ENCODE measurements at regions of chr17 and their contacts with region 1.

Region 1: GRCh38 chr17:30716461-30717300 is 107.8 kb downstream of the CRLF3 start:
- DNase-seq: peak in 1 of 2 experiments; percentile 22
- H3K4me3 ChIP-seq: no peak overlapping the region
- H3K4me1 ChIP-seq: no peaks in the 10 kb centered on the region
- H3K27me3 ChIP-seq: no peaks in the 10 kb centered on the region

Region 2: DNA sequence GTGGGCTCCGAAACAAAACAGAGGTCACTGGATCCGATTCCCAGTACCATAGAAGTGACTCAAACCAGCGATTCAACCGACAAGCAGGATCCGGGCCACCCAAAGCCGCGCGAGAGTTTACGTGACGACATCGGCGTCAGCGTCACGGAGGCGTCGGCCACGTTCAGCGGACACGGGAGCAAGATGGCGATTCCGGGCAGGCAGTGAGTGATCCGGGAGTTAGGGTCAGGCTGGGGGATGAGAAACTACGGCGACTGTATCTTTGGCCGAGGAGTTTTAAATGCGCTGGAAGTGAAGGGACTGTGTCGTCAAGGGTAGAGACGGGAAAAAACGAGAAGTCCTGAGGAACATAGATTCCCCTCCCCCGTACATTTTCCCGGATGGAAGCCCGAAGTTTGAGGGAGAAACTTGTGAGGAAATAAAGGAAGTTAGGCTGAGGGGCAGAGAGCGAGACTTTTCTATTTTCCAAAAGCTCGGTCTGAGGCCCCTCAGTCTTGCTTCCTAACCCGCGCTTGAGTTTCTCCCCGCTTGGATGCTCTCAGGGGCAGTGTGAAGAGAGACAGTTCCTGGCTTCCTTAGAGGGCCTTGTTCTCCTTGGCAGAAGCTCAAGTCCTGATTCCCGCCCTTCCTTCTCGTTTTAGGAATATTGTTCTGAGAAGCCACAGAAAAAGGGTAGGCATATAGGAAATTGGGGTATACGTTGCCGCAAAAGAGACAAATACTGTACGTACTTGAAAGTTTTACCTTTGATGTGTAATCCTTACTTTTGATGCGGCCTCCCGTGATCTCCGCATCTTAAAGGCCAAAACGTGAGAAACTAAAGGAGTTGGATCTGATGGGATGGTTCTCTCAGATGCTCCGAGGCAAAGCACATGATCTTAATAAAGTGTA is 599.8 kb before region 1 on chr17 and contains the start of gene NSRP1:
- in situ Hi-C with region 1: loop called (anchors 25 kb)
- DNase-seq: peak; percentile 87 to 96
- H3K4me3 ChIP-seq: peak within 1 kb of the TSS; percentile 76
- H3K4me1 ChIP-seq: peaks cover 25% of the 10 kb centered on the region
- H3K27me3 ChIP-seq: no peaks in the 10 kb centered on the region

Region 3: DNA sequence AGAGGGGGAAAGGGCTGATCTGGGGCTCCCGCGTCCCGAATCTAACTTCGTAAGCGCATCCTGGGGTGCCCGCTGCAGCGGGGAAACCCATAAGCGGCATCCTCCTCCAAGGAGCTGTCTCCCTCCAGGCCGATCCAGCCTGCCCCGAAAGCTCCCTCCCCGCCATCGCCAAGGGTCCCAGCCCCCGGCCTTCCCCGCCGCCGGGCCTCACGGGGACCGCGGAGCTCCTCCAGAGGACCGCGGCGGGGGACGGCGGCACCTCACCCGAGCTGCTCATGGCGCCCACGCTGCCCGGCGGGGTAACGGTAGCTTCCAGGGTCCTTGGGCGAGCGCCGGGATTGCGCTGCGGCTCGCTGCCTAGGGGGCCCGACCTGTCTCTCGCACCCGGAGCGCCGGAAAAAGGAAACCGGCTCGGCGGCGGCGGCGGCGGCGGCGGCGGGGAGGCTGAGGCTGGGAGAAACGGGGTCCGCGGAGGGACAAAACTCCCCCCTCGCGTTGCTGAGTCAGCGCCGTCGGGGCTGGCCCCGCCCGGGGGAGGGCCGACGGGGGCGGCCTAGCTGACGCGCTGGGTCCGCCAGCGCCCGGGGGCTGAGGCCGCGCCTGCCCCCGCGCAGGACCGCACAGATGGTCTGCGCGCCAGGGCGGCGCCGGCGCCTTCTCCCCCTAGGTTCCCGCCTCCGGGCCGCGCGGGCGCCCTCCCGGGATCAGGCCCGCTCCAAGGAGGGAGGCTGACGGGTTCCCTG is 425.0 kb before region 1 on chr17 and contains the start of gene BLMH:
- in situ Hi-C with region 1: no loop called
- DNase-seq: peak; percentile 64 to 83
- H3K4me3 ChIP-seq: peak within 1 kb of the TSS; percentile 77
- H3K4me1 ChIP-seq: peaks cover 13% of the 10 kb centered on the region
- H3K27me3 ChIP-seq: no peaks in the 10 kb centered on the region

Region 4: DNA sequence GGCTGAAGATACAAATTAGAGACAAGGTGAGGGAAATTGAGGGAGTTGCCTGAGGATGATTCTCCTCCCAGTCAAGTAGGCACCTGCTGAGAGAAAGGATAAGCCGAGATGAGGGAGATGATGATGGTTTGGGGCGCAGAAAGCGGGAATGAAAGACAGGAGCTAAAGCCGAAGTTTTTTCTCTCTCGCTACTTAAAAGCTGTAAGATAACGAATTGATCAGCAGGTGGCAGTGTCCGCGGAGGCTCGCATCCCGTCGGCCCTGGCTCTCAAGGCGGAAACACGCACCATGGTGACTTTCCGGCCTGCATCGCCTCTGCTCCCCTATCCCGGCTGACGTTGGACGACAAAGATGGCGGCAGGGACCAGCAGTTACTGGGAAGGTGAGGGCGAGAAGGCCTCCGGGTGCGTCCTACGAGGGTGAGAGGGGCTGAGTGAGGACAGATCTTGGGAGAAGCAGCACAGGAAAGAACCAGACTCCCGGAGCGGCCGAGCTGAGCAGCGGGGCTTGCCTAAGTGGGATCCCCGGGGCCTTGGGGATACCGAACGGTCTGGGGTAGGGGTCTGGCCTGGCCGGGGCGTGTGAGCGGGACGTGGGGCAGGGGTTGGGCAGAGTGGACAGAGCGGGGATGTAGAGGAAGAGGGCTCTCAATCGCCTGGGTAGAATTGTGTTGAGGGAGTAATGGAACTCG is 239.5 kb before region 1 on chr17 and contains the start of gene GOSR1:
- in situ Hi-C with region 1: loop called (anchors 10 kb)
- DNase-seq: peak; percentile 91 to 95
- H3K4me3 ChIP-seq: peak within 1 kb of the TSS; percentile 81
- H3K4me1 ChIP-seq: peaks cover 9% of the 10 kb centered on the region; the same call in 1 of the 2 replicates
- H3K27me3 ChIP-seq: peaks cover 9% of the 10 kb centered on the region